ENCODE measurements at regions of chr5 and their contacts with region 1.

Region 1: GRCh38 chr5:138352071-138352721 is at the start of gene KDM3B:
- DNase-seq: peak; percentile 23
- H3K4me3 ChIP-seq: peak within 1 kb of the TSS; percentile 81
- H3K27ac ChIP-seq: peak within 1 kb of the TSS; percentile 85
- H3K27me3 ChIP-seq: no peaks in the 10 kb centered on the region
- CTCF ChIP-seq: peak; percentile 98
- polyA plus RNA-seq, gene KDM3B: 28.3 and 32.7 TPM in 2 replicates

Region 2: DNA sequence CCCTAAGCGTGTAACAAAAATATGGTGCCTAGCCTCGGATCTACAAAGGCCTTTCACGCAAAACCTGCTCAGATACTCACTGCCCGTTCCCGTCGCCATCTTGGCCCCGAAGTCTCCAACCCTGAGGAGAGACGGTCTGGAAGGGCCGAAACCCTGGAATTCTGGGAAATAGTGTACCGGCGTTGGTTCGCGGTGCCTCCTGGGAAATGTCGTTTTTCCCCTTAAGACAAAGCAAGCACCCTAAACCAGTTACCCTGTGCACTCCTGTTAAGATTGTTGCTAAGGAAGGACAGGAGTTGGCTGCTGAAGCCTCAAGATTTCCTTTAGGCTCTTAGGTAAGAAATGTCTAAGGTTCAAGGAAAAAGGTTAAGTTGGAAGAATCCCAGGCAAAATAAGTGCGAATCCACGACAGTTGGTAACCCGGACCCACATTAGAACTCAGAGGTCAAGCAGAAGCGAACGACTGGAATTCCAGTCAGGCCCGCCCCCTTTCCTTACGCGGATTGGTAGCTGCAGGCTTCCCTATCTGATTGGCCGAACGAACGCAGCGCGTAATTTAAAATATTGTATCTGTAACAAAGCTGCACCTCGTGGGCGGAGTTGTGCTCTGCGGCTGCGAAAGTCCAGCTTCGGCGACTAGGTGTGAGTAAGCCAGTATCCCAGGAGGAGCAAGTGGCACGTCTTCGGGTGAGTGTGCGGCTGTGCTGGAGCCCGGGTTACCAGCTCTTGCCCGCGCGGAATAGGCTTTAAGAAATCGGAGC is 173.5 kb before region 1 on chr5 and contains the starts of genes BRD8 and KIF20A:
- CTCF ChIA-PET with region 1: interaction called, 12 read pairs
- POLR2A ChIA-PET with region 1: no interaction called
- DNase-seq: peak; percentile 85
- H3K4me3 ChIP-seq: peak within 1 kb of the TSS; percentile 99
- H3K27ac ChIP-seq: peak within 1 kb of the TSS; percentile 91
- H3K27me3 ChIP-seq: no peaks in the 10 kb centered on the region
- CTCF ChIP-seq: no peak
- polyA plus RNA-seq, gene BRD8: 59.6 and 72.2 TPM in 2 replicates
- polyA plus RNA-seq, gene KIF20A: 21.8 and 25.4 TPM in 2 replicates

Region 3: DNA sequence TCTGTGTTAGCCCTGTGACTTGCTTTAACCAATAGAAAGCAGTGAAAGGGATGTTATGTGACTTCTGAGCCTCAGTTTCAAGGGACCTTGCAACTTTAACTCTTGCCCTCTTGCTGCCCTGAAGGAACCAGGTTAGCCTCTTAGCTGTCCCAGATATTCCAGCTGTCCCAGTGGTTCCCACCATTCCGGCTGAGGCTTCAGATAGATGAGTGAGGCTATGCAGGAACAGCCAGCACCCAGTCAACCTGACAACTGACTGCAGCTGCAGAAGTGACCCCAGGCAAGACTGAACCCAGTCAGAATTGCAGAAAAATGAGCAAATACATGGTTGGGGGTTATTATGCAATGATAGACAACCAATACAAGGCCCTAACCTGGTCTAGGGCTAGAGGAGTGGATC is 128.7 kb before region 1 on chr5:
- CTCF ChIA-PET with region 1: interaction called, 34 read pairs
- POLR2A ChIA-PET with region 1: no interaction called
- DNase-seq: no peak
- H3K4me3 ChIP-seq: no peak overlapping the region
- H3K27ac ChIP-seq: no peak overlapping the region
- H3K27me3 ChIP-seq: no peaks in the 10 kb centered on the region
- CTCF ChIP-seq: no peak

Region 4: DNA sequence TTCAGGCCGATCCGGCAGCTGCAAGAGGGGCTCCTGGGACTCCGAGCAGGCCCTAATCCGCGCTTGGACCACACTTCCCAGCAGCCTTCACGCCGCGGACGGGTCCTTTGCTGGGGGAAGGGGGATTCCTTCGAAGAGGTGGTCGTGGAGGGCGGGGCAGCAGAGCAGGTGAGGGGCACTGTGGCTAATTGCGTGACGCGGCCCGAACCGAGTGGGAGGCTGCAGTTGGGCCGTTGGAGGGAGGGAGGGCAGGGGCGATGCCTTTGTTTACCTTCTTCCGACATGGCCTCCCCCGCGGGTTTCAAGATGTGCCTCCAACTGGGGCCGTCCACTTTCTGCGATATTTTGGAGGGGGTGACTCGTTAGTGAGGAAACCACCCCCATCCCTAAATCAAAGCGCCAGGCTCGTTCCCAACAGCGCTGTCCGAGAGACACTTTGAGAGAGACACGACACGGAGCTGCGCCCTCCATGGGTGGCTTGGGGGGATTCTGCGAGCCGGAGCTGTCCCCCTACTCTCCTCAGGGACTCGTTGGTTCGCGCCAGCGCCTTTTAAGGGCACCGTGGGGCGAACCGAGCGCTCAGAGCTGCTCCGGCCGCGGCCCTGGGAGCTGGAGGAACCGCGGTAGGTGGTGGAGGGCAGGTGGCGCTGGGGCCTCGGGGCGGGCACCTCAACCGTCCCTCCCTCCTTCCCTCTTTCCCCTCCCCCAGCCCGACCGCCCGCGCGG is 14.3 kb before region 1 on chr5 and contains the start of gene FAM53C:
- CTCF ChIA-PET with region 1: interaction called, 169 read pairs
- POLR2A ChIA-PET with region 1: interaction called, 88 read pairs
- DNase-seq: peak; percentile 84
- H3K4me3 ChIP-seq: peak within 1 kb of the TSS; percentile 91
- H3K27ac ChIP-seq: peak within 1 kb of the TSS; percentile 98
- H3K27me3 ChIP-seq: no peaks in the 10 kb centered on the region
- CTCF ChIP-seq: no peak
- polyA plus RNA-seq, gene FAM53C: 35.6 and 35.9 TPM in 2 replicates

Region 5: GRCh38 chr5:138385660-138386059 is 33.5 kb after region 1 on chr5:
- CTCF ChIA-PET with region 1: interaction called, 20 read pairs
- POLR2A ChIA-PET with region 1: no interaction called
- DNase-seq: no peak
- H3K4me3 ChIP-seq: no peak overlapping the region
- H3K27ac ChIP-seq: no peak overlapping the region
- H3K27me3 ChIP-seq: no peaks in the 10 kb centered on the region
- CTCF ChIP-seq: no peak

Measured in AG04450 (cell line).